ENCODE measurements at regions of chr4 and their contacts with region 1.

Region 1: DNA sequence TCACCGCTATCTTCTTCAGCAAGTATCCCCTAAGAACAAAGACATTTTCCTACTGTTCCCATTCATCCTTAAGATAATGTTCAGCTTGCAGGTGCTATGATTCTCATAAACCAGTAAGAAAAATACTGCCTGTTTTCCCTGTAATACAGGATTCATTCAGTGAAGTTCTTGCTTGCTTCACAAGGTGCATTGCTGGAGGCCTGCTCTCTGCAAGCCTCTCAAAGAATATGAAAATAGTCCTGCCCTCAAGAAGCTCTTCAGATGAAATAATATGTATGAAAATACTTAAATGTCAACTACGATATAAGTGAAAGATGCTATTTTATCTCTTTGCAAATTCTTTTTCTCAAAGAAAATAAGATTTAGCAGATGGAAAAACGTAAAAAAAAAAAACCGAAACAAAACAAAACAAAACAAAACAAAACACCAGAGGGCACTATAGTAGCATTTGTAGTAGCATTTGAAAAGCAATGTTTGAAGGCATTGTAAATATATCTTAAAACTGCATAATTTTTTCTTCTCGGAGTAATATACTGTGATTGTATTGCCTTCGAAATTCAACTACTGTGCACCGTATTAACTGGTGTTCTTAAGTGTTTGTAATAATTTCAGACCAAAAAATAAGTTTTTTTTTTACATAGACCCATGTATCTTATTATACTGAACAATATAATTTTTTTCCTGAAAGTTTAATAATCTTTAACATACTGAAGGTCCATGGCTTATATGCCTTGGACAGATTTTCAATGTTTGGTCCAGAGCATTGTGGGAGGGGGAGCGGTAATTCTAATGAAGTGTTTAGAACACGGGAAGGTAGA is 26.0 kb downstream of the ADH4 start:
- DNase-seq: no peak

Region 2: DNA sequence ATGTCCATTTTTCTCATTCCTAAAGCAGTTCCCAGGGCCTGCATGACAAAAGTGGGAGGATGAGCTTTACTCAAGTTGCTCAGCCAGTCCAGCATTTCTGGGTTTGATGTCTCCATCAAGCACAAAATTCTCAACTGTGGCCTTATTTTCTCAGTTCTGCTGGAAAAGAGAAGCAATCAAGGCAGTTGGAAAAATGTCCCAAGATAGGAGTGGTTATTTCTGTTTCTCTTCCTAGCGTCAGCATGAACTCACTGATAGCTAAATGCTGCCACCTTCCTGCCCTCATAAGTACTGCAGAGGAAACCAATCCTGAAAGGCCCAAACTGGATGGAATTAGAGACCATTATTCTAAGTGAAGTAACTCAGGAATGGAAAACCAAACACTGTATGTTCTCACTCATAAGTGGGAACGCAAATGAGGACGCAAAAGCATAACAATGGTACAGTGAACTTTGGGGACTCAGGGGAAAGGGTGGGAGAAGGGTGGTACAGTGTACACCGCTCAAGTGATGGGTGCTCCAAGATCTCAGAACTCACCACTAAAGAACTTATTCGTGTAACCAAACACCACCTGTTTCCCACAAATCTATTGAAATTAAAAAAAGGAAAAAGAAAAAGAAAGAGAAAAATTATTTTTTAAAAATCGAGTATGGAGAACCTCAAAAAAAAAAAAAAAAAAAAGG is 287.5 kb after region 1 on chr4:
- intact Hi-C with region 1: loop called (anchors 10 kb)
- DNase-seq: peak in 41 of 42 donors; percentile 7 to 89 (median 71)